ENCODE measurements at regions of chr3 and their contacts with region 1.

Region 1: DNA sequence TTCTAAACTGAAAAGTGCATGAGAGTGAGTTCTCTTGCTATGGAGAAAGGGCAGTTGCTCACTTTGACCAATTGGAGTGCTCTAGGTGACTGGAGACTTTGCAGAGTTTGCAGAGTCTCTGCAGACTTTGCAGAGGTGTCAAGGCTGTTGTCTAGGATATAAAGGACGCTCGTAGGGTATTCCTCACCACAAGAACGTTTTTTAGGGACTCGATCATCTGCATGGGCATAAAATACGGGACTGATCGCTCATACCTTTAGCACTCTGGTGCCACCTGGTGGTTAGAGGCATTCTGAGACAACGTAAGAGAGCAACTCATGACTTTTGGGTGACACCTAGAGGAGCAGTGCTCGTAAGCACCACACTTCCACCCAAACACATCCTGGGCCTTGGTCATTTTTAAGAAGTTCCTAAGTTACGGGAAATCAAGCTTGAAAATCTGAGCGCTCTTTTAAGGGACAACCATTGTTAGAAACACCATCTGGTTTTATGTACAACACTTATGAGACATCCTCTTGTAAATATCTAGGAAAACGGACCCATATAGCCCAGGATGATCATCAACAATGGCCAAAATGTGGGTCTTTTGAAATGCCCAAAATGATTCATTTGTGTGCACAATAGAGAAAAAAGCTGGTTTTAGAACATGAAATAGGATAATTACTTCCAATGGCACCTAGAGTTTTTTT is 51.6 kb upstream of the XCR1 start:
- DNase-seq: peak; percentile 57 to 96 (median 85)
- H3K4me3 ChIP-seq: peak overlapping the region in 25 of 59 donors; percentile 7 to 52 (median 23)
- H3K27ac ChIP-seq: peak overlapping the region in 1 of 59 donors; percentile 15
- H3K27me3 ChIP-seq: no peaks in the 10 kb centered on the region
- CTCF ChIP-seq: peak in 54 of 56 donors; percentile 93 to 100 (median 100)

Region 2: DNA sequence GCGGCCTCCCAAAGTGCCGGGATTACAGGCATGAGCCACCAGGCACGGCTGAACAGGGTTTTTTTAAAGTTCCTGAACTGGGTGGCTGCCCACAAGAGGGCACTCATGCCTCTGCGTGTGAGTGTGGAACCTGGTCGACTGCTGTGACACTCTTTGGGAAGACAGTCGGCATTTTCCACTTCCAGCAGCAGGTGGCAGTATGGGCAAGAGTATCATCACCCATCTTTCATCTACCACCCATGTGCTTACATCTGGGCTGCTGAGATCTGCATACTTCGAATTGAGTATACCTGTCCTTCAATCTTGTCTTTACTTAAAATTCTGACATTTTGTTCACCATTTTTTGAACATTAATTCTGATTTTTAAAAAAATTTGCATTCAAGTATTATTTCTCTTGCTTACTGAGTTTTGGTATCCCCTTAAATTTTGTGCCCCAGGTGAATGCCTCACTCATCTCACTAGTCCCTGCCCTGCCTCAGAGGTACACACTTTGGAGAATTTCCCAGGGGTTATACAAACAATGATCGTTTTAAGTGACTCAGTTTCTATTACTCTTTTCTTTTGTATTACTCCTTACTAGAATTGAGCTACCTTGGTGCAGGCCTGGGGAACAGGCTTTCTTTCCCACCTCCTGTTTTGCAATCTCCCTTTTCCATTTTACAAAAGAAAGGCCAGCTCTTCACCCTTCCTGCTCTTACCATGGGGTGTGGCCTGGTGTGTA is 1041.0 kb before region 1 on chr3:
- intact Hi-C with region 1: loop called in 1 of 2 experiments (anchors 5 kb)
- DNase-seq: peak; percentile 83 to 98 (median 92)
- H3K4me3 ChIP-seq: peak overlapping the region in 30 of 59 donors; percentile 0 to 46 (median 22)
- H3K27ac ChIP-seq: no peak overlapping the region
- H3K27me3 ChIP-seq: no peaks in the 10 kb centered on the region
- CTCF ChIP-seq: peak; percentile 83 to 100 (median 96)

Region 3: DNA sequence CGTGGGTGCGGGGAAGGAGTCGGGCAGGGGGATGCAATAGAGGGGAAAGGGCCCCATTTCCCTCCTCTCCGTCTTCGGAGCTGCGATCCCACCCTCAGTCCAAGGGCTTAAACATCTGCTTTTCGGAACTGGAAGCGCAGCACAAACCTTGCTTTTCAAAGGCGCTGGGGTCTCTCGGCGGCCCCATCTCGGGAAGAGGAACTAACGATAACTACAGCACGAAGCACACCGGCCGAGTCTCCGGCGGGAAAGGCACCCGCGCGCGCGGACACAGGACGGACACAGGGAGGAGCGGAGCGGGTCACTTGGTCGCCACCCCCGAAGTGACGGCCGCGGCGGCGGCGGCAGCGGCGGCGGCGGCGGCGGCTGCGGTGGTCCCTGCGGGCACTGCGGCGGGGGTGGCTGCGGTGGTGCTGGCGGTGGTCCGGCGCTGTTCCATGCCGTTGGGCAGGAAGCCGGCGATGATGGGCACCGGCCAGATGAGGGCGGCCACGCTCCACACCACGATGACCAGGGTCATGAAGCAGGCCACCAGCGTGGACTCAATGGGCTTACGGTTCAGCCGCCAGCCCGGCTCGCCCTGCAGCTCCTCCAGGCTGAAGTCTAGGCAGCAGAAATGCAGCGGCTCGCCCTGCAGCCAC is 853.9 kb before region 1 on chr3:
- intact Hi-C with region 1: loop called in 1 of 2 experiments (anchors 5 kb)
- DNase-seq: peak; percentile 71 to 83 (median 78)
- H3K4me3 ChIP-seq: peak overlapping the region; percentile 34 to 75 (median 60)
- H3K27ac ChIP-seq: peak overlapping the region in 9 of 59 donors; percentile 11 to 48 (median 33)
- H3K27me3 ChIP-seq: peaks cover 0 to 31% (median 0%) of the 10 kb centered on the region in 45 donors
- CTCF ChIP-seq: peak in 53 of 56 donors; percentile 22 to 79 (median 60)

Region 4: DNA sequence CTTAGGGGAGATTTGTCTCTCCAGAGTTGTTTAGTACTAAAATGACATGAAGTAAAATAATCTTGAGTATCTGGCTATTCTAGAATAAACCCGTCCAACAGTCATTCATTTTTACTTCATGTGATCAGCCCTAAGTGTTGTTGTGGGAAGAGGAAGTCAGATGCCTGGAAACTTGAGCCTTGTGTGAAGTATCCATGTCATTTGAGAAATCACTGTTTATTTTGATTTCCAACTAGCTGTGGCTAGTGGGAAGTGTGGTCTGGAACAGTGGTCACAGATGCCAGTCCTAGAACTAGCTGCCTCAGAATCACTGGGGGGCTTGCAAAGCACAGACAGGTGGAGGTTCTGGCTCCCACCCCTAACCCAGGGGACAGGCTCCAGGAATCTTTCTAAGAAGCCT is 562.0 kb before region 1 on chr3:
- intact Hi-C with region 1: loop called in 1 of 2 experiments (anchors 10 kb)
- DNase-seq: no peak
- H3K4me3 ChIP-seq: no peak overlapping the region
- H3K27ac ChIP-seq: no peak overlapping the region
- H3K27me3 ChIP-seq: no peaks in the 10 kb centered on the region
- CTCF ChIP-seq: no peak

Region 5: GRCh38 chr3:45760878-45761711 is 317.8 kb before region 1 on chr3:
- intact Hi-C with region 1: loop called (anchors 5 kb)
- DNase-seq: peak in 4 of 10 donors; percentile 21 to 67 (median 38)
- H3K4me3 ChIP-seq: no peak overlapping the region
- H3K27ac ChIP-seq: no peak overlapping the region
- H3K27me3 ChIP-seq: peaks cover 0 to 8% (median 0%) of the 10 kb centered on the region in 45 donors
- CTCF ChIP-seq: peak in 55 of 56 donors; percentile 26 to 79 (median 62)

Region 6: DNA sequence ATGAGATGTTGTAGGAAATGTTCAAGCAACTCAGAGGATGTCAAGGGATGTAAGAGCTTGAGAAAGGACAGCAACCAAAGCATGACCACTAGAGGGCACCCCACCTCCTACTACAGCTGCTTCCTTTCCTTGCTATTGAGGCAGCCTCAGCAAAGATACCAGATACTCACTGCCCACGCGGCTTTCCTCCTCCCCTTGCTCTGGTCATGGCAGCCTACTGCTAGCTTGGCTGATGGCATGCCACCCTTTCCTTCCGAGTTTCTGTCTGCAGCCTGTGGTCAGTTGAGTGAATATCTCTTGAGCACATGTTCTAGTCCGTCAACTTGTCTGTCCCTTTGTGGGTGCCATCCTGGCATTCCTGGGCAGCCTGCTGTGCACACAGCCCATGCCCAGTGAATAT is 140.0 kb before region 1 on chr3:
- intact Hi-C with region 1: loop called (anchors 1 to 2 kb)
- DNase-seq: peak; percentile 70 to 97 (median 88)
- H3K4me3 ChIP-seq: no peak overlapping the region
- H3K27ac ChIP-seq: peak overlapping the region in 41 of 59 donors; percentile 3 to 85 (median 51)
- H3K27me3 ChIP-seq: no peaks in the 10 kb centered on the region
- CTCF ChIP-seq: peak; percentile 77 to 98 (median 92)

Region 7: DNA sequence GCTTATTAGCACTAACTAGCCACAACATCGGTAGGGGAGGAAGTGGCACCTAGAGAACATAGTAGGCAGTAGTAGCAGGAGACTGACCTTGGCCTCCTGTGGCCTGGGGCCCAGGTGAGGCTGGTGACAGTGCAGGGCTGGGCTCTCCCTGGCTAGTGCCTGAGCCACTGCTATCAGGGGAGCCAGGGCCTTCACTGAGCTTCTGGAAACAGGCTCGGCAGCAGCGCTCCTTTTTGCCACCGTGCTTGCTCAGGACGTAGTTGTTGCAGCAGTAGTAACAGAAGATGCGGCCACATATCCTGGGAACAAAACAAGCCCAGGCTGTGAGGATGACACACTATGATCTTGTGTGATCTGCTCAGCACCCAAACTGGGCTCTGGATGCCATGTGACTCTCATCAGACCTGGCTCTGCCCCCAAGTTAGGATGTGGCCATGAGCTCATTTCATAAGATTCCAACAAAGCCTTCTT is 120.5 kb before region 1 on chr3:
- intact Hi-C with region 1: loop called in 1 of 2 experiments (anchors 5 kb)
- DNase-seq: no peak
- H3K4me3 ChIP-seq: no peak overlapping the region
- H3K27ac ChIP-seq: peak overlapping the region in 25 of 59 donors; percentile 6 to 69 (median 31)
- H3K27me3 ChIP-seq: no peaks in the 10 kb centered on the region
- CTCF ChIP-seq: no peak

Measured in dorsolateral prefrontal cortex (tissue), 120 donors.